GM10248 (cell line): ENCODE measurements at regions of chr16 and their contacts with region 1.

Region 1: DNA sequence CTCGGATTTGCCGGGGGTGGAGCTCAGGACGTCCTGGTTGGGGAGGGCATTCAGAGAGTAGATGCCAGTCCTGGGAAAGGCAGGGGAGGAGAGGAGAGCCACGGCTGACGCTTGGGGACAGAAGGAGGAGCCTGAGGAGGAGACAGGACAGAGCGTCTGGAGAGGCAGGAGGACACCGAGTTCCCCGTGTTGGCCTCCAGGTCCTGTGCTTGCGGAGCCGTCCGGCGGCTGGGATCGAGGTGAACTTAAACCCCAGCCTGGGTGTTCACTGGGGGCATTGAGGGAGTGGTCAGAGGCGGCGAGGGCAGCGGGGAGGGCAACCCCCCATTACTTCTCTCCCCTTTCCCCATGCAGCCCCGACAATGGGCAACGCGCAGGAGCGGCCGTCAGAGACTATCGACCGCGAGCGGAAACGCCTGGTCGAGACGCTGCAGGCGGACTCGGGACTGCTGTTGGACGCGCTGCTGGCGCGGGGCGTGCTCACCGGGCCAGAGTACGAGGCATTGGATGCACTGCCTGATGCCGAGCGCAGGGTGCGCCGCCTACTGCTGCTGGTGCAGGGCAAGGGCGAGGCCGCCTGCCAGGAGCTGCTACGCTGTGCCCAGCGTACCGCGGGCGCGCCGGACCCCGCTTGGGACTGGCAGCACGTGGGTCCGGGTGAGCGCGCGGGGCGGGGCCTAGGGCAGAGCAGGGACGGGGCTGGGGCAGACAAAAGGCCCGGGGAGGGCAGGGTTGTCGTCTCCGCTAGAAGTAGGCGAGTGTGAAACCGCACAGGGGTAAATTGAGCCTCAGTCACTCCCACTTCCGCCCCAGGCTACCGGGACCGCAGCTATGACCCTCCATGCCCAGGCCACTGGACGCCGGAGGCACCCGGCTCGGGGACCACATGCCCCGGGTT is 3.7 kb downstream of the NOL3 start:
- DNase-seq: peak; percentile 77
- CTCF ChIP-seq: no peak

Region 2: GRCh38 chr16:67190448-67191399 is 16.7 kb after region 1 on chr16:
- CTCF ChIA-PET with region 1: interaction called, 40 read pairs
- POLR2A ChIA-PET with region 1: no interaction called
- DNase-seq: no peak
- CTCF ChIP-seq: no peak

Region 3: DNA sequence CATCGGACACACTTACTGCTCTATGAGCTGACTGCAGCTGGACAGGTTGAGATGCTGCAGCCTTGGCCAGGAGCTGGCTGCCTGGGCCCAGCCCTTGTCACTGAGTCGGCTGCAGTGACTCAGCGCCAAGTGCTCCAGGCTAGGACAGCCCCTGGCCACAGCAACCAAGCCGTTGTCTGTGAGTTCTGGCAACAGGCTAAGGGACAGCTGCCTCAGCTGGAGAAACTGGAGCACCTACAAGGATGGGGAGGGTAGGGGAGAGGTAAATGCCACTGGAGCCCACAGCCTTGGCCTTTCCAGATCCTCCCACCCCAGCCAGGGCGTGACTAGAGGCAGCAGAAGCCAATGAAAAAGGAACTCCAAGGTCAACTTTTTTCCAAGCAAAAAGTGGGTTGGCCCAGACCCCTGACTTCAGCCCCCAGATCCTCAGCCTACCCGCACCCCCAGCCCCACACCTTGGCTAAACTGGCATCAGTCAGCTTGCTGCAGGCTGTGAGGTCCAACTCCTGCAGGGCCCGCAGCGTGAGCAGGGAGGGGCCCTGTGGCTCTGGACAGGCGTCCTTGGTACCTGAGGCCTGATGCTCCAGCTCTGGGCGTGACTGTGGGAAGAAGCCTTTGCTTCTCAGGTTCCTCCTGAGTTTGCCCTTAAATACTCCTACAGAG is 33.9 kb after region 1 on chr16:
- CTCF ChIA-PET with region 1: no interaction called
- POLR2A ChIA-PET with region 1: no interaction called
- DNase-seq: no peak
- CTCF ChIP-seq: no peak